ENCODE measurements at regions of chrX and their contacts with region 1.

Region 1: GRCh38 chrX:109635176-109635575 is 10.2 kb upstream of the KCNE5 start:
- DNase-seq: no peak
- H3K4me3 ChIP-seq: no peak overlapping the region
- H3K27me3 ChIP-seq: no peaks in the 10 kb centered on the region
- CTCF ChIP-seq: peak; percentile 44; the same call in 1 of the 2 replicates

Region 2: DNA sequence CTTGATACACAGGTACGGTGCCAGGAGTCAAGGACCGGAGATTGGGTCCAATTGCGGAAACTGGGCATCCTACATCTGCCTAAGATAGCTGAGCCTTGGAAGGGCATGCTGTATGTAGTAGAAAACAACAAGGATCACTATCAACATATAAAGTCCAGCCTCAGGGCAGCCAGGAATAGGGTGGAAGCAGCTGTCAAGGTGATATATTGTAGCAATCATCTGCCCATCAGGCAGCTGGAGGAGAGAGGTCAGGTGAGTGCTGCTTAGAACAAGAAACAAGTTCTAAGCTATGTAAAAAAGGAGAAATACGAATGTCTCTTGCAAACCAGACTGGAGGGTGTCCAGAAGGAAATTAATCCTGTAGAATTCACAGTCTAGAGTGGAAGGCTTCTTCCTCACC is 45.0 kb before region 1 on chrX:
- CTCF ChIA-PET with region 1: no interaction called
- POLR2A ChIA-PET with region 1: interaction called, 27 read pairs
- DNase-seq: no peak
- H3K4me3 ChIP-seq: no peak overlapping the region
- H3K27me3 ChIP-seq: no peaks in the 10 kb centered on the region
- CTCF ChIP-seq: no peak

Region 3: DNA sequence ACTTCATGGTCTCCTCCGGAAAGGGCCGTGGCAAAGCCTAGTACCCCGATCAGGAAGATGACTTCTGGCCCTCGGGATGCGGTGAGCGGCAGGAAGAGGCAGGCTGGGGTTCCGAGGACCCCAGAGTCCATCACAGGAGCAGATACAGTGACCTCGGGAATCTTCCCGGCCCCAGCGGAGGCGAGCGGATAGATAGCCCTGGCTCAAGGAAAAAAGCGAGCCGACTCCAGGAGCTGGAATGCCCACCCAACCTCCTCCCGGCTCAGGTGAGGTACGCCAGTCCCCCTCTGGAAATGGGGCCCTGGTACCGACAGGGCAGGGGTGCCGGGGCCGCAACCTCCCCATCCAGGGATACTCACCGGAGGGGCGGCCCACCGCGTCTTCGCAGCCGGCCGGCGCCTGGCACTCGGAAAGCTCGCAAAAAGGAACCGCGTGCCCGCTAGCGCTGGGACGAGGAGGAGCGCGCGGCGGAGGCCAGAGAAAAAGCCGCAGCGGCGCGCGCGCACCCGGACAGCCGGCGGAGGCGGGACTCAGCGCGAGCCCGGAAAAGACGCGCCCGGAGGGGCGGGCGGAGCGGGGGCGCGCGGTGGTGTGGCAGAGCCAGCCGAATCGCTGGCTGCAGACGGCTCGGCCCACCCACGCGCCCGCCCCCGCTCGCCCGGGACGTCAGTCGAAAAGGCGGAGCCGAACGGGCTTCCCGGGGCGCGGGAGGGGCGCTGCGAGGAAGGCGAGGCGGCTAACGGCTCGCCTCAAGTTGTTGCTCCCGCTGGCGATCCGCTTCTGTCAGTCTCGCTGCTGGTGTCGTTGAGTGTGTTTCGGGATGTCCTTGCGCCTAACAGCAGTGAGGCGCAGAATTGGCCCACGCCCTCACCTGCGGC is 97.8 kb after region 1 on chrX and contains the start of gene ACSL4:
- CTCF ChIA-PET with region 1: no interaction called
- POLR2A ChIA-PET with region 1: interaction called, 12 read pairs
- DNase-seq: no peak
- H3K4me3 ChIP-seq: peak within 1 kb of the TSS; percentile 91
- H3K27me3 ChIP-seq: no peaks in the 10 kb centered on the region
- CTCF ChIP-seq: no peak
- polyA plus RNA-seq, gene ACSL4: 32.5 and 42.5 TPM in 2 replicates

Region 4: GRCh38 chrX:109774706-109775105 is 139.5 kb after region 1 on chrX:
- CTCF ChIA-PET with region 1: no interaction called
- POLR2A ChIA-PET with region 1: no interaction called
- DNase-seq: peak; percentile 31
- H3K4me3 ChIP-seq: no peak overlapping the region
- H3K27me3 ChIP-seq: no peaks in the 10 kb centered on the region
- CTCF ChIP-seq: no peak

Measured in BJ (cell line).